H1 (cell line): ENCODE measurements at regions of chr5 and their contacts with region 1.

Region 1: GRCh38 chr5:140840978-140841959 is at the start of gene PCDHA8:
- DNase-seq: peak in 1 of 2 experiments; percentile 84
- H3K4me3 ChIP-seq: peak within 1 kb of the TSS in 3 of 4 experiments; percentile 29 to 47 (median 29); a peak in 4 of 8 replicates
- H3K27ac ChIP-seq: no peak within 1 kb of the TSS
- H3K4me1 ChIP-seq: no peaks in the 10 kb centered on the region
- H3K27me3 ChIP-seq: no peaks in the 10 kb centered on the region
- CTCF ChIP-seq: peak; percentile 63 to 81 (median 79)
- EP300 ChIP-seq: no peak
- POLR2A ChIP-seq: no peak
- RAD21 ChIP-seq: peak; percentile 70 to 76
- total RNA-seq, gene PCDHA8: 0.52 and 0.96 TPM in 2 replicates

Region 2: DNA sequence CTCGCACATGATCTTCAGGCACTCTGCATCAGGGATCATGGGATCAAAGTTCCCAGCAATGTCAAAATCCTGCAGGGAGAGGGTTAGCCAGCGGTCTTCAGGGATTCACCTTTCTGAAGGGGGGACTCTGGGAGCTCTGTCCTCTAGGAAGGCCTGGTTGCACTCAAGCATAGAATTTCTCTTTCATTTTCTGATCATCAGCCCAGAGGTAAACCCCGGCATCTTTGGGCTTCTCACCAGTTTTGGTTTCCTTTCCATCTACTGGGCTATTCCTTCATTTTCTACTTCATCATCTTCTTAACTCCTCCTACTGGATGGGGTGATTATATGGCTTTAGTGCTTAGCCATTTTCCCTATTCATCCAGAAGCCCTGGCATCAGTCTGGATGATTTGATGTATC is 163.3 kb before region 1 on chr5:
- CTCF ChIA-PET with region 1: no interaction called
- POLR2A ChIA-PET with region 1: no interaction called
- DNase-seq: no peak
- H3K4me3 ChIP-seq: no peak overlapping the region
- H3K27ac ChIP-seq: no peak overlapping the region
- H3K4me1 ChIP-seq: no peaks in the 10 kb centered on the region; a peak in 1 of 7 replicates
- H3K27me3 ChIP-seq: no peaks in the 10 kb centered on the region
- CTCF ChIP-seq: no peak
- EP300 ChIP-seq: no peak
- POLR2A ChIP-seq: no peak
- RAD21 ChIP-seq: no peak

Region 3: DNA sequence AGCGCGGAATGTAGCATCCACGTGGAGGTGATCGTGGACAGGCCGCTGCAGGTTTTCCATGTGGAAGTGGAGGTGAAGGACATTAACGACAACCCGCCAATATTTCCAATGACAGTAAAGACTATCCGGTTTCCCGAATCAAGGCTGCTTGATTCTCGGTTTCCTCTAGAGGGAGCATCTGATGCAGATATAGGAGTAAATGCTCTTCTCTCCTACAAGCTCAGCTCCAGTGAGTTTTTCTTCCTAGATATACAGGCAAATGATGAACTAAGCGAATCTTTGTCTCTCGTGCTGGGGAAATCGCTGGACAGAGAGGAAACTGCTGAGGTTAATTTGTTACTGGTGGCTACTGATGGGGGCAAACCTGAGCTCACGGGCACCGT is 46.0 kb before region 1 on chr5:
- CTCF ChIA-PET with region 1: interaction called, 19 read pairs
- POLR2A ChIA-PET with region 1: no interaction called
- DNase-seq: no peak
- H3K4me3 ChIP-seq: peak overlapping the region; percentile 51 to 86 (median 58)
- H3K27ac ChIP-seq: no peak overlapping the region
- H3K4me1 ChIP-seq: no peaks in the 10 kb centered on the region
- H3K27me3 ChIP-seq: no peaks in the 10 kb centered on the region
- CTCF ChIP-seq: peak in 2 of 3 experiments; percentile 54 to 59; a peak in 2 of 4 replicates
- EP300 ChIP-seq: no peak
- POLR2A ChIP-seq: no peak
- RAD21 ChIP-seq: no peak; a peak in 1 of 4 replicates

Region 4: GRCh38 chr5:140821375-140822280 is 19.6 kb before region 1 on chr5 and contains the start of gene PCDHA5:
- CTCF ChIA-PET with region 1: interaction called, 40 read pairs
- POLR2A ChIA-PET with region 1: interaction called, 5 read pairs
- DNase-seq: no peak
- H3K4me3 ChIP-seq: no peak within 1 kb of the TSS
- H3K27ac ChIP-seq: no peak within 1 kb of the TSS
- H3K4me1 ChIP-seq: no peaks in the 10 kb centered on the region
- H3K27me3 ChIP-seq: no peaks in the 10 kb centered on the region
- CTCF ChIP-seq: peak in 1 of 3 experiments; percentile 10; a peak in 1 of 4 replicates
- EP300 ChIP-seq: no peak
- POLR2A ChIP-seq: no peak
- RAD21 ChIP-seq: no peak
- total RNA-seq, gene PCDHA5: 0.52 and 0.76 TPM in 2 replicates

Region 5: GRCh38 chr5:140855772-140856674 is 14.8 kb after region 1 on chr5 and contains the start of gene PCDHA10:
- CTCF ChIA-PET with region 1: interaction called, 122 read pairs
- POLR2A ChIA-PET with region 1: interaction called, 4 read pairs
- DNase-seq: no peak
- H3K4me3 ChIP-seq: peak within 1 kb of the TSS; percentile 67 to 83 (median 72)
- H3K27ac ChIP-seq: no peak within 1 kb of the TSS; the same call in 1 of the 2 replicates
- H3K4me1 ChIP-seq: no peaks in the 10 kb centered on the region
- H3K27me3 ChIP-seq: no peaks in the 10 kb centered on the region
- CTCF ChIP-seq: peak in 2 of 3 experiments; percentile 40 to 47; a peak in 3 of 4 replicates
- EP300 ChIP-seq: no peak
- POLR2A ChIP-seq: no peak
- RAD21 ChIP-seq: peak; percentile 45 to 57; a peak in 3 of 4 replicates
- total RNA-seq, gene PCDHA10: 5.4 and 5.5 TPM in 2 replicates

Region 6: DNA sequence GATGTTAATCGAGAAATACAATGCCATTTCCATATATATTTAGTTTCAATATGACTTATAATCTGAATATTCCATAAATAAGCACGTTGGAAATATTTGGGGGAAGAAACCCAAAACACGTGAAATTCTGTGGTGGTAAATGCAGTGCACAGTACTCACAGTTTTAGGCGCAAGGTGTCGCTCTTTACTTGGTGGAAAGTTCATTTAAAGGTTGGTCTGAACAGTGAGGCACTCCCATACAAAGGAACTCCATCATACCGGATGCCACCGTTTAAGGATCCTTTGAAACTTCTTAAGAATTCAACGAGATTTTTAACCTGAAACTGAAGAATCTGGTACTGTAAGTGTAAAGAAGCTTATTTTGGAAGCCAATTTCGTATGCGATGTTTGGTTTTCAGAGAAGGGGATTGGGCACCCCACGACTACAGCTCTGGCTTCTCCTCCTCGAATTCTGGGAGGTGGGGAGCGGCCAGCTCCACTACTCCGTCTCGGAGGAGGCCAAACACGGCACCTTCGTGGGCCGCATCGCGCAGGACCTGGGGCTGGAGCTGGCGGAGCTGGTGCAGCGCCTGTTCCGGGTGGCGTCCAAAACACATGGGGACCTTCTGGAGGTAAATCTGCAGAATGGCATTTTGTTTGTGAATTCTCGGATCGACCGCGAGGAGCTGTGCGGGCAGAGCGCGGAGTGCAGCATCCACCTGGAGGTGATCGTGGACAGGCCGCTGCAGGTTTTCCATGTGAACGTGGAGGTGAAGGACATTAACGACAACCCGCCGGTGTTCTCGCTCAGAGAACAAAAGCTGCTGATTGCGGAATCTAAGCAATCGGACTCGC is 27.7 kb after region 1 on chr5 and contains the start of gene PCDHA11:
- CTCF ChIA-PET with region 1: interaction called, 122 read pairs
- POLR2A ChIA-PET with region 1: interaction called, 10 read pairs
- DNase-seq: no peak
- H3K4me3 ChIP-seq: peak within 1 kb of the TSS; percentile 54 to 66 (median 58)
- H3K27ac ChIP-seq: peak within 1 kb of the TSS; percentile 37; the same call in 1 of the 2 replicates
- H3K4me1 ChIP-seq: no peaks in the 10 kb centered on the region
- H3K27me3 ChIP-seq: no peaks in the 10 kb centered on the region
- CTCF ChIP-seq: peak; percentile 32 to 68 (median 56)
- EP300 ChIP-seq: no peak
- POLR2A ChIP-seq: peak in 1 of 2 experiments; percentile 46; a peak in 2 of 3 replicates
- RAD21 ChIP-seq: peak; percentile 64 to 72
- total RNA-seq, gene PCDHA11: 6.6 and 6.9 TPM in 2 replicates

Region 7: GRCh38 chr5:141050622-141051525 is 209.6 kb after region 1 on chr5 and contains the start of gene PCDHB1:
- CTCF ChIA-PET with region 1: interaction called, 12 read pairs
- POLR2A ChIA-PET with region 1: no interaction called
- DNase-seq: no peak
- H3K4me3 ChIP-seq: peak within 1 kb of the TSS; percentile 42 to 65 (median 60)
- H3K27ac ChIP-seq: no peak within 1 kb of the TSS
- H3K4me1 ChIP-seq: peaks cover 0 to 9% (median 3%) of the 10 kb centered on the region in 4 experiments; a peak in 5 of 7 replicates
- H3K27me3 ChIP-seq: peaks cover 0 to 14% (median 11%) of the 10 kb centered on the region in 4 experiments; a peak in 6 of 7 replicates
- CTCF ChIP-seq: no peak
- EP300 ChIP-seq: no peak
- POLR2A ChIP-seq: no peak
- RAD21 ChIP-seq: no peak
- total RNA-seq, gene PCDHB1: 0.04 and 0.08 TPM in 2 replicates